Activated CD4-positive, alpha-beta T cell treated with anti-CD3 and anti-CD28 coated beads, Interleukin-2, amount 10 ng/mL, durations not matched to agents 24 days and 14 days (primary cell): ENCODE measurements at regions of chr4 and their contacts with region 1.

Region 1: DNA sequence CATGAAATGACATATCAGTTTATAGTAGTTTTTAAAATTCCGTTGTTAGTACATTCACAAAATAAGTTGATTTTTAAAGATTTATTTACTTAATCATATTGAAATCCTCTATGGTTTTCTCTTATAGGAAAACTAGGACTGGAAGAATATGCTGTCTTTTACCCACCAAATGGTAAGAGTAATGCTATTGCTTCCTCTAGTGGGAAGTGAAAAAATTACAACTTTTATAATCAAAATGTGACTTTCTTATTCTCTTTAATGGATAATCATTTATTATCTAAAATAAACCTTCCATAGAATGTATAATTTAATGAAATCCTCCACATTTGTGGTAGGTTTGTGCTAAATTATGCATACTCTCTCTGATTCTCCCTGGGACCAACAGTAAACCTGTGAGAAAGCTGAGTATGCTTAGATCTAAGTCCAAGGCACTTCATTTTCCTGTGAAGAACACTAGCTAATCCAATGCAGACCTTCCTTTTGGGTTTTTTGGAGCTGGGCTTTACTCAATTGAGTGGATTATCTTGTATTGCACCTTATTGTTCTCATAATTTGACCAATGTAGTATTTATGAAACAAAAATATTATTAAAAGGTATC is 136.2 kb downstream of the TBC1D19 start:
- DNase-seq: no peak
- H3K4me3 Mint-ChIP-seq: no peak overlapping the region
- H3K27ac Mint-ChIP-seq: no peak overlapping the region
- H3K4me1 Mint-ChIP-seq: no peaks in the 10 kb centered on the region
- H3K27me3 Mint-ChIP-seq: no peaks in the 10 kb centered on the region

Region 2: GRCh38 chr4:25986807-25987206 is 733.2 kb before region 1 on chr4:
- intact Hi-C with region 1: loop called (anchors 5 kb)
- DNase-seq: no peak
- H3K4me3 Mint-ChIP-seq: no peak overlapping the region
- H3K27ac Mint-ChIP-seq: no peak overlapping the region
- H3K4me1 Mint-ChIP-seq: peaks cover 4% of the 10 kb centered on the region
- H3K27me3 Mint-ChIP-seq: peaks cover 2% of the 10 kb centered on the region

Region 3: DNA sequence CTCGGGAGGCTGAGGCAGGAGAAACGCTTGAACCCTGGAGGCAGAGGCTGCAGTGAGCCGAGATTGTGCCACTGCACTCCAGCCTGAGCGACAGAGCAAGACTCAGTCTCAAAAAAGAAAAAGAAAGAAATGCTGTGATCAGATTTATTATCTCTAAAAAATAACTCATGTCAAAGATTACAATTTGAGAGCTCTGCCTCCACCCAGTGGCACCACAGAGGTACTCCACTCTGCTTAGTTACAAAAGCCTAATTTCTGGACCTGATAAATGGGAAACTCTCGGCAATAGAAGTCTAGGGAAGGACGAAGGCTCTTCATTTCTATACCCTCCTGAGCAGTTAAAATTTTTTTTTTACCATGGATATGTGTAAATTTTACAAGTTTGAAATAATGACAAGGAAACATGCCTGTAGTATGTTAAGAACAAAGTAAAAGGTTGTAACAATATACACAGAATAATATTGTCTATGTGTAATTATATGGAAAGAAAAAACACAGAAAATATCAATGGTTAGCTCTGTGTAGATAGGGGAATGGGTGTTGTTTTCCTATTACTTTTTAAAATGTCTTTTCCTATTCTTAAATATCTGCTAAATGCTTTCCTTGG is 290.4 kb after region 1 on chr4:
- intact Hi-C with region 1: loop called (anchors 2 kb)
- DNase-seq: peak; percentile 84
- H3K4me3 Mint-ChIP-seq: no peak overlapping the region
- H3K27ac Mint-ChIP-seq: no peak overlapping the region
- H3K4me1 Mint-ChIP-seq: peaks cover 9% of the 10 kb centered on the region
- H3K27me3 Mint-ChIP-seq: no peaks in the 10 kb centered on the region